GM10248 (cell line): ENCODE measurements at regions of chr10 and their contacts with region 1.

Region 1: DNA sequence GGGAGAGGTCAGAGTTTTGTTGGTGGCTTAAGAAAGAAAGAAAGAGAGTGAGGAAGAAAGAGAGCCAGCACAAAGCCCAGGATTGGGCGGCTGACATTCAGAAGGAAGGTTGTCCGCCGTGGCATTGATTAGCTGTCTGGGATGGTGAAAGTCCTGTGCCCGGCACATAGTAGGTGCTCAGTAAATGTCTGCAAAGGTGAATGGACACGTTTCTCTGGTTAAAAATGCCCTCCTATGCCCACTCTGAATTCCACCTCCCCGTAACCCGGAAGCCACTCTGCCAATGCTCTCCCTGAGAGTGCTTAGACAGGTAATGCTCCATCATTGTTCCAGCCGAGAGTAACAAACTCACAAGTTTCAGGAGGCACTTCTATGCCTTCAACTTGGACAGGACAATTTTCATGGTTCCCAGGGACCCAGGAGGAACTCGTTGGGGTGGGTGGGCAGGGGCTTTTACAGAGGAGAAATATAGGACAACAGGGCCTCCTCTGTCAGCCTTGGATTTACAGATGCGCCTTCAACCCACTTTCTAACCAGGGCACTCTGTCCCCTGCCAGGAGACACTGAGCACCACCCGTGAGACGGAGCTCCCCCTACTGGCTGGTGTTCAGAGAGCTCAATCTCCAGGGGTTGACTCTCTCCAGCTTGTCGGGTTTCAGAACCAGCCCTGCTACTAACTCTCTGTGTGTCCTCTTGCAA is 411.5 kb upstream of the ZMIZ1 start:
- DNase-seq: peak; percentile 76
- CTCF ChIP-seq: peak; percentile 68

Region 2: DNA sequence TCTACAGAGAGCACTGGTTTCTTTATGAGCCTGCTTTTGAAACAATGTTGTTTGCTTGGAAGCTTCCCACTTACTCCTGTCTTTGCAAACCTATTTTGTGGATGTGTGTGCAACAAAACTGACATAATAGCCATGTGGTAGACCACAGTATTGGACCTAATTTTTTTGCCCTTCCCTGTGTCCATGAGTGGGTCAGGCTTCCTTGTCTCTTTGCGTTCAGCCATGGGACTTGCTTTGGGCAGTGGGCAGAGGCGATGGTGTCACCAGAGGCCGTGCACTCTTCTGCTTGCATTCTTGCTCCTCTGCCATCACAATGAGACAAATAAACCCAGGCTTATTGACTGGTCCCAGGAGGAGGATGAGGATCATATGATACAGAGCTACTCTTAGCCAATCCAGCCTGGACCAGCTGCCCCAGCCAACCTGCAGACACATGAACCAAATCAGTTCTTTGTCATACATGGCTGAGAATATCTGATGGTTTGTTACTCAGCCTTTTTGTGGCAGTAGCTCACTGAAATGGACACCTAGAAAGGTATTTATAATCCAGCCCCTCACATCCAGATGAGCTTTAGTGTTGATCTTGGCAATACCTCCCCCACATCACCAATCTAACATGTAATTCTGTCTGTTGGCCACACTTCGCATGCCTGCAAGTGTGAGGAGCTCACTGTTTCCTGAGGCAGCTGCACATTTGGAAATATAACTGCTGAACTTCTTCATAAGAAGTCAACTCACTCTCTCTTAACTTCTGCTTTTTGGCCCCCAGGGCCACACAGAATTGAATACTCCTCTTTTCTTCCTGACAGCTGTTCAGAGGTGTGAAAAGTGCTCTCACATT is 16.3 kb before region 1 on chr10:
- CTCF ChIA-PET with region 1: interaction called, 21 read pairs
- POLR2A ChIA-PET with region 1: no interaction called
- DNase-seq: no peak
- CTCF ChIP-seq: no peak

Region 3: DNA sequence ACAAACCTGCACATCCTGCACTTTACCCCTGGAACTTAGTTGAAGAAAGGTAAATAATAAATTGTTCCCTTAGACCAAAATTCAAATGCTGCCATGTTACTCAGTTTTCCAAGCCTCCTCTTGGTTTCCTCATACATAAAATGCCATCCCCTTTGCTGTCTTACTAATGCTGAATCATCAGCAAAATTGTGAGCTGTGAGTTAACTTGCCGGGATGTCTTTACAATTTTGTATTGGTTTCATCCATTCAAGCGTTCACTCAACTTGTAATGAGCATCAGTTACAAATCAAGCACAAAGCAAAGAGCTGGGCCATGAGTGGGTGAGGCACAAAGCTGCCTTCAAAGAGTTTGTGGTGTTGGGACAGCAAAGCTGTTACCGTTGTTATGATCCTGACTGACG is 15.6 kb after region 1 on chr10:
- CTCF ChIA-PET with region 1: interaction called, 15 read pairs
- POLR2A ChIA-PET with region 1: no interaction called
- DNase-seq: no peak
- CTCF ChIP-seq: no peak